Endothelial cell of umbilical vein (primary cell): ENCODE measurements at regions of chr10 and their contacts with region 1.

Region 1: DNA sequence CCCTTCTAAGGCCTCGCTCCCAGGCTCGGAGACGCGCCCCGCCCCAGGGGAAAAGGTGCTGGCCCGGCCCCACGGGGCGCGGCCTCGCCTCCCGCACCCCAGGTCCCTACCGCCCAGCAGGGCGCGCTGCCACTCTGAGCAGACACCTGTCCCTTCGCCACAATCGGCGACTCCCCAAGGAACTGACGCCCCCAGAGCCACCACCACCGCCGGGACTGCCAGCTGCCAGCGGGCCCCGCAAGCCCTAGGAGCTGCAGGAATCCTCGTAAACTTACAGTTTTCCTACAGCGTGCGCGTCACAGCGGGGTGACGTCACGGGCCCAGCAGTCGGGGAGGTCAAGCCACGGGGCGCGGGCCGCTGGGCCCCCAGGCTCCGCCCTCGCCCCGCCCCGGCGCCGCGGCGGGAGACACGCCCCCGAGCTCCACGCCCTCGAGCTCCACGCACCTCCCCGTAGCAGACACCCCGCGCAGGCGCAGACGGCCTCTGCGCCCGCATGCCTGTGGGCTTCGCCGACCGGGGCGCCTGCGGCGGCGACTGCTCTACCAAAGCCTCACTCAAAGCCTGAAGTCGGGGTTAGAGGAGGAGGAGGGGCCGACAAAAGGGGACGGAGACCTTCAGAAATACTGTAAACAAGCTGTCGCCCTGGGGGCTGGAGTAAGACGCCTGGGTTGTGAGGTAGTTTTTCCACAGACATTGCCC is at the start of gene ZNF438:
- DNase-seq: peak; percentile 97
- H3K4me3 ChIP-seq: peak within 1 kb of the TSS in 2 of 3 experiments; percentile 50 to 66
- H3K27ac ChIP-seq: peak within 1 kb of the TSS; percentile 92
- H3K4me1 ChIP-seq: peaks cover 32% of the 10 kb centered on the region
- H3K27me3 ChIP-seq: no peaks in the 10 kb centered on the region
- CTCF ChIP-seq: peak; percentile 40 to 44
- POLR2A ChIP-seq: peak; percentile 82
- total RNA-seq, gene ZNF438: 11.2 and 15.1 TPM in 2 replicates

Region 2: DNA sequence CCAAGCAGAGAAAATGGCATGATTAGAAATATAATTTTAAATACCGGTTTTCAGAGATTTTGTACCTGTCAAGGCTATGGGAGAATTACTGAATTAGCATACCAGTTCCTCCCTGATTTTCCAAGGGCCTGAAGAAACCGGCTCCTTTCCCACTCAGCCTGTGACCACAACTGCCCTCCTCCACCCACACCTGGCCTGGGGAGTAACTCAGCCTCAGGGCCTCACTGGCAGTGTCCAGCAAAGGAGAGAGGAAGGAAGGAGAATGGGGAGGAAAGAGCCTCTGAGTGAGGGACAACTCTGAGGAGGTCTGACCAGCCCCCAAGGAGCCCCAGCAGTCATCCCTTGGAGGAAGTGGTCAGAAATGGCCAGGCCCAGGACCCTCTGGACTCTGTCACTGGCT is 304.2 kb before region 1 on chr10:
- CTCF ChIA-PET with region 1: no interaction called
- POLR2A ChIA-PET with region 1: no interaction called
- dilution Hi-C with region 1: no loop called
- intact Hi-C with region 1: loop called (anchors 2 kb)
- DNase-seq: no peak
- H3K4me3 ChIP-seq: no peak overlapping the region
- H3K27ac ChIP-seq: no peak overlapping the region
- H3K4me1 ChIP-seq: no peaks in the 10 kb centered on the region
- H3K27me3 ChIP-seq: no peaks in the 10 kb centered on the region
- CTCF ChIP-seq: no peak
- POLR2A ChIP-seq: no peak

Region 3: DNA sequence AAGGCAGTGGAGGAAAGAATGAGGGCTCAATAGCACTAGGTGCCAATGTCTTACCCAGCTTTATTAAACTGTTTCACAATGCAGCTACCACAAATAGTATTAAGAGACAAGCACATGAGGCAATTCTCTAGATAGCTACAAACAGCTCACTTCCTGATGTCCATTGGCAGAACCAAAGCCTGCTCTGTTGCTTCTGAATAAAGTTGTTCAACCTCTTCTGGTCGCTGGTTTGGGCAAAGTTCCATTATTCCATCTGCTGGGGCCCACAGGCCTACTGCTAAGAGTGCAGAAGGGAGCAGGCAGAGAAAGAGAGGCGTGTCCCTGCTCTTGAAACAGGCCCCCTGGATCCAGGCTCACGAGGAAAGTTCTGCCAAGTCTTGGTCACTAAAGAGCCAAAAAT is 173.9 kb before region 1 on chr10:
- CTCF ChIA-PET with region 1: no interaction called
- POLR2A ChIA-PET with region 1: no interaction called
- dilution Hi-C with region 1: no loop called
- intact Hi-C with region 1: loop called (anchors 2 kb)
- DNase-seq: peak; percentile 50
- H3K4me3 ChIP-seq: no peak overlapping the region
- H3K27ac ChIP-seq: peak overlapping the region; percentile 97
- H3K4me1 ChIP-seq: peaks cover 63% of the 10 kb centered on the region
- H3K27me3 ChIP-seq: no peaks in the 10 kb centered on the region
- CTCF ChIP-seq: no peak
- POLR2A ChIP-seq: no peak

Region 4: GRCh38 chr10:31004611-31005193 is 27.0 kb before region 1 on chr10:
- CTCF ChIA-PET with region 1: interaction called, 6 read pairs
- POLR2A ChIA-PET with region 1: interaction called, 4 read pairs
- dilution Hi-C with region 1: no loop called
- intact Hi-C with region 1: loop called (anchors 2 kb)
- DNase-seq: peak; percentile 97
- H3K4me3 ChIP-seq: peak overlapping the region in 1 of 3 experiments; percentile 11
- H3K27ac ChIP-seq: peak overlapping the region; percentile 95
- H3K4me1 ChIP-seq: peaks cover 70% of the 10 kb centered on the region
- H3K27me3 ChIP-seq: no peaks in the 10 kb centered on the region
- CTCF ChIP-seq: no peak
- POLR2A ChIP-seq: peak; percentile 67

Region 5: DNA sequence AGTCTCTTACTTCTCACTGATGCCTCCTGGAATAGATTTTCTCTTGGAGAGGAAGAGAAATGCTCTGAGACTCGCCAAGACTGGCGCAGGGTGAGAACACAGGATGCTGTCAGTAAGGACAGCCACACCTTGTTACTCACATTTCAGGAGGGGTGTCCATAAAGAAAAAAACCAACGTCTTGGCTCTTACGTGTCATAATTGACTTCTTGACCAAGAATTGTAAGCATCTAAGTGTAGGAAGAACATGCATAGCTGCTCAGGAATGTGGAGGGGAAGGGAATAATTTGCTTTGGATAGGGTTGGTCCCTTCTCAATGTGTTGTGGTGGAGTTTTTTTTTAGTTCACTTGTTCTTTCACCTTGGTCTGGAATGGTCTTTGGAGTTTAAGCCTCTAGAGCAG is 43.7 kb after region 1 on chr10:
- CTCF ChIA-PET with region 1: no interaction called
- POLR2A ChIA-PET with region 1: no interaction called
- dilution Hi-C with region 1: no loop called
- intact Hi-C with region 1: loop called (anchors 2 kb)
- DNase-seq: peak; percentile 19
- H3K4me3 ChIP-seq: no peak overlapping the region
- H3K27ac ChIP-seq: no peak overlapping the region
- H3K4me1 ChIP-seq: peaks cover 17% of the 10 kb centered on the region
- H3K27me3 ChIP-seq: no peaks in the 10 kb centered on the region
- CTCF ChIP-seq: no peak
- POLR2A ChIP-seq: no peak

Region 6: DNA sequence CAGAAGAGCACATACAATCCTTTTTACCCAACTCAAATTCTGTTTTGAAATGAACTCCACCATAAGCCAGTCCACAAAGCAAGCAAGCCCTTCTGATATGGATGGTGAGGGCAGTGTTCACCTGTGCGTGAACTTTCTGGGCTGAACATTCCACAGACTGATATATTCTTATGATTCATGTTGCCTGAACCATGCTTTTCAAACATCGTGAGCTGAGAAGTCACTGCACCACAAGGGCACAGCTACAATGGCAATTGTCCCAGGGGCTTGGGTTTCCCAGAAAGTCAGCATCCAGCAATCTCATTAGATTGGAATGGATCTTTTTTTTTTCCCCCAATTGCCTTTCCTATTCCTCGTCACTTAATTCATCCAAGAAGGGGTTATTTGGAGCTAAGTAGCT is 86.8 kb after region 1 on chr10:
- CTCF ChIA-PET with region 1: no interaction called
- POLR2A ChIA-PET with region 1: no interaction called
- dilution Hi-C with region 1: no loop called
- intact Hi-C with region 1: no loop called
- DNase-seq: no peak
- H3K4me3 ChIP-seq: no peak overlapping the region
- H3K27ac ChIP-seq: no peak overlapping the region
- H3K4me1 ChIP-seq: no peaks in the 10 kb centered on the region
- H3K27me3 ChIP-seq: no peaks in the 10 kb centered on the region
- CTCF ChIP-seq: no peak
- POLR2A ChIP-seq: no peak

Region 7: GRCh38 chr10:31490858-31491504 is 459.3 kb after region 1 on chr10:
- CTCF ChIA-PET with region 1: interaction called, 10 read pairs
- POLR2A ChIA-PET with region 1: no interaction called
- dilution Hi-C with region 1: no loop called
- intact Hi-C with region 1: loop called (anchors 1 kb)
- DNase-seq: peak; percentile 63
- H3K4me3 ChIP-seq: no peak overlapping the region
- H3K27ac ChIP-seq: peak overlapping the region; percentile 7
- H3K4me1 ChIP-seq: peaks cover 13% of the 10 kb centered on the region
- H3K27me3 ChIP-seq: no peaks in the 10 kb centered on the region
- CTCF ChIP-seq: peak; percentile 50 to 53
- POLR2A ChIP-seq: no peak